ENCODE measurements at regions of chr14 and their contacts with region 1.

Region 1: GRCh38 chr14:91911474-91912032 is 35.9 kb downstream of the FBLN5 start:
- DNase-seq: peak; percentile 52
- H3K4me3 Mint-ChIP-seq: no peak overlapping the region
- H3K27ac Mint-ChIP-seq: no peak overlapping the region
- H3K4me1 Mint-ChIP-seq: peaks cover 12% of the 10 kb centered on the region
- H3K27me3 Mint-ChIP-seq: no peaks in the 10 kb centered on the region
- CTCF ChIP-seq: no peak

Region 2: GRCh38 chr14:91649930-91650329 is 261.6 kb before region 1 on chr14:
- CTCF ChIA-PET with region 1: interaction called, 10 read pairs
- intact Hi-C with region 1: loop called (anchors 5 kb)
- DNase-seq: peak; percentile 41
- H3K4me3 Mint-ChIP-seq: no peak overlapping the region
- H3K27ac Mint-ChIP-seq: no peak overlapping the region
- H3K4me1 Mint-ChIP-seq: peaks cover 9% of the 10 kb centered on the region
- H3K27me3 Mint-ChIP-seq: no peaks in the 10 kb centered on the region
- CTCF ChIP-seq: peak; percentile 19

Region 3: GRCh38 chr14:91780452-91780851 is 131.1 kb before region 1 on chr14:
- CTCF ChIA-PET with region 1: no interaction called
- intact Hi-C with region 1: no loop called
- DNase-seq: no peak
- H3K4me3 Mint-ChIP-seq: no peak overlapping the region
- H3K27ac Mint-ChIP-seq: peak overlapping the region; percentile 33
- H3K4me1 Mint-ChIP-seq: no peaks in the 10 kb centered on the region
- H3K27me3 Mint-ChIP-seq: no peaks in the 10 kb centered on the region
- CTCF ChIP-seq: no peak

Region 4: DNA sequence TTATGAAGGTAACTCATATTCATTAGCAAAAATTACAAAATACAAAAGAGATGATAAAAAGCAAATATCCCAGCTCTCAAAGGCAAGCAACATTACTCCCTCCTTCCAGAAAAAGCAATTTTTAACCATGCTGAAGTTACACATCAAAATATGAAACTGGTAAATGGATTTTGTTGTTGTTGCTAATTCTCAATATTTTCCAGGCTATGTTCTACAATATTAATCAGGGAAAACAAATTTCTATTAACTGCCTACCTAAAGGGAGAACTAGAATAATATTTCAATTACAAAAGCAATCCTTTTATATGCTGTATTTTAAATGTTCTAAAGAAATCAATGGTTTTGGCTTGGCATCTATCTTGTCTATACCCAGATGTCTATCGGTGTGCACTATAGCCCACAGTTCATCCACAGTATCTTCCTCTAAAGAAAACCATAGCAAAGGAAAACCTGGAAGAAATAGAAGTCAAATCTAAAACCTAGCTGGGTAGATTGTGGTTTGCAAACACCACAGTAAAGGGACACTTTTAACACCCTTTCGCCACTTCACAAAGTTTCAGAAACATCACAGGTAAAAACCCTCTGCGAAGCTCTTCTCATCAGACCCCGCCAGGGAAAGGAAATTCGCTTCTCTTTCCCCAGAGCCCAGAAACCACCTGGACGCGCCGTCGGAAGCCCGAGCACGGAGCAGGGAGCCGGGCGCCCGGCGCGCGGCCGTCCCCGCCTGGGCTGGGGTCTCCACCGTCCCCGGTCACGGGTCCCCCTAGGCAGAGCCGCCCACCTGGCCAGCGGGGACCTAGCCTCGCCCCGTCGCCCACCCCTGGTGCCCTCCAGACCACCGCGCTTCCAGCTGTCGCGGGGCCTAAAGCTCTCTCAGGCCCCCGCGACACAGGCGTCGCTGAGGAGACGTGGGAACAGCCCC is 76.1 kb before region 1 on chr14:
- CTCF ChIA-PET with region 1: interaction called, 9 read pairs
- intact Hi-C with region 1: loop called (anchors 5 kb)
- DNase-seq: peak; percentile 25
- H3K4me3 Mint-ChIP-seq: peak overlapping the region; percentile 81
- H3K27ac Mint-ChIP-seq: peak overlapping the region; percentile 77
- H3K4me1 Mint-ChIP-seq: peaks cover 44% of the 10 kb centered on the region
- H3K27me3 Mint-ChIP-seq: no peaks in the 10 kb centered on the region
- CTCF ChIP-seq: no peak

Region 5: DNA sequence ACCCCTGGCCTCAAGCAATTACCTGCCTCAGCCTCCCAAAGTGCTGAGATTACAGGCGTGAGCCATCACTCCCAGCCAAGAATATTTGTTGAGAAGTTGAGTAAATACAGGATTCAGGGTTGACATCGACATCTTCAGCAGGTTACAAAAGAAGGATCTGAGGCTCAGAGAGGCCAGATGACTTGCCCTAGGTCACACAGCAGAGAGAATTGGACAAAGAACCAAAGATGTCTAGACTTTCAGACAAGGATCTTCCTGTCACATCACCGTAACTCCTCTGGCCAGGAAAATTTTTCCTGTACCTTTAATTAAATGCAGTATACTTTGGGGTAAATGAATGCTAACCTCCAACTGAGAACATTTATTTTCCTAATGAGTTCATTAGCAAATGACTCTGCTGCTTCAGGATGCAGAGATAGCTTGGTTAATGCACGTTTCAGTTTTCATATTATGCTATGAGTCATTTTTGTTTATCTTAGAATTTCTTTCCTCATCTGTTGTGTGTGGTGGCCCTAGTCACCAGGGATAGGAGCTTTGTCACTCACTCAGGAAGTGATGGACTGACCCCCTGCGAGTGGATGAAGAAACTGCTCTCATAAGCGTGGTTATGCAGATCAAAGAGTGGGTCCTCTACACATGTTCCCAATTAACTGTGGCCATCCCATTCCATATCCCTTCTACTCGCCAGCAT is 53.2 kb before region 1 on chr14:
- CTCF ChIA-PET with region 1: interaction called, 19 read pairs
- intact Hi-C with region 1: no loop called
- DNase-seq: peak; percentile 63
- H3K4me3 Mint-ChIP-seq: no peak overlapping the region
- H3K27ac Mint-ChIP-seq: peak overlapping the region; percentile 58
- H3K4me1 Mint-ChIP-seq: peaks cover 17% of the 10 kb centered on the region
- H3K27me3 Mint-ChIP-seq: peaks cover 11% of the 10 kb centered on the region
- CTCF ChIP-seq: no peak

Region 6: DNA sequence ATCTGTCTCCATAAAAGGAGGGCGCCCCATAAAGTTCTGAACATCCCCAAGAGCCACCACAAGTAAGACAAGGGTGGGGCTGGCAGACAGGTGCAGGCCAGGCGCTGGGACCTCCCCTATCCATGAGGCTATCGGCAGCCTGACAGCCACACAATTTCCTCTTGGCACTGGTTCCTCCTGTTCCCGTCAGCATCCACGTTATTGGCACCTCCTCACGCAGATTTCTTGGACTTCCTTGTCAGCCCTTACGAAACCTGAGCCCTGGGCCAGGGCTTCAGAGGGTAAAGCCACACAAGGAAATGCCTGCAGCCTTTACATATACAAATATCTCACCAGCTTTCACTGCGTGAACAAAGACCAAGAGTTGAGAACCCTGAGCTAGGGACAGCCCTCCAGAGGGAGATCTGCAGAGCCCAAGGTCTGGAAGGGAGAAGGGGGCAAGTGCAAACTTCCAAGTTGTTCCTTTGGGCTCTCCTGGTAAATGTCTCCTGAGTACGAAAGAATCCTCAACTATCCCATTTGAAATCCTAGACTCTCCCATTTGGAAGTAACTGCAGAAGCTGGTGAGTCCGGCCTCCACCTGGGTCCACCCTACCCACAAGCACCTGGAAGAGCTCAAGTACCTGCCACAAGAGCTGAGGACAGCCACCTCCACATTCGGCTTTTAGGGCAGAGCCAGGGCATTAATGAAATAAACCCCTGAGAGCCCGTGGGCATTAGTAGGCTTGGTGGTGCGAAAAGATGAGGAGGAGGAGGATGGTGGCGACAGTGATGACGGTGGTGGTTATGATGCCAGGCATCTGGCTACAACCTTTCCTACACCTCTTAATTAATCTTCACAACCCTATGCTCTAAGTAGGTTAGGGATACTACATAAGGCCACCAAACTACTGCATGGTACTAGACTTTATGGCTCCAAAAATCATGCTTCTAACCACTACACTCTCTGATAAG is 38.8 kb before region 1 on chr14:
- CTCF ChIA-PET with region 1: interaction called, 8 read pairs
- intact Hi-C with region 1: loop called (anchors 5 kb)
- DNase-seq: peak; percentile 92
- H3K4me3 Mint-ChIP-seq: peak overlapping the region; percentile 56
- H3K27ac Mint-ChIP-seq: peak overlapping the region; percentile 98
- H3K4me1 Mint-ChIP-seq: peaks cover 57% of the 10 kb centered on the region
- H3K27me3 Mint-ChIP-seq: no peaks in the 10 kb centered on the region
- CTCF ChIP-seq: no peak

Region 7: DNA sequence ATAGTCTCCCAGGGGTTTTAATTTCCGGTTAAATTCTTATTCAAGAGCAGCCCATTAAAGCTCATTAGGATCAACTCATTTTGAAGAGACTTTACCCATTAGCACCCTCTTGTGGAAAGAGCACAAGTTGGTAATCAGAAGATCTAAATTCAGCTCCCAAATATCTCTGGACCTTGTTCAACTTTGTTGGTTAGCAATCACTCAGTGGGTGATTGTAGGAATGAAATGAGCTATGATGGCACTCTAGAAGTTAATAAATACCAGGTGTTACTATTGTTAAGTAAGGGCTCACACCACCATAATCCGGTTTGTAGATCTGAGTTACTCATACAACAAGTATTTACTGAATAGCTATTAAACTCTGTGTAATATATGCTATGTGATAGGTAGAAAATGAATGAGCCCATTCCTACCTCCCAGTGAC is 85.4 kb after region 1 on chr14:
- CTCF ChIA-PET with region 1: interaction called, 11 read pairs
- intact Hi-C with region 1: no loop called
- DNase-seq: peak; percentile 36
- H3K4me3 Mint-ChIP-seq: peak overlapping the region; percentile 4
- H3K27ac Mint-ChIP-seq: peak overlapping the region; percentile 78
- H3K4me1 Mint-ChIP-seq: peaks cover 13% of the 10 kb centered on the region
- H3K27me3 Mint-ChIP-seq: no peaks in the 10 kb centered on the region
- CTCF ChIP-seq: no peak

Region 8: DNA sequence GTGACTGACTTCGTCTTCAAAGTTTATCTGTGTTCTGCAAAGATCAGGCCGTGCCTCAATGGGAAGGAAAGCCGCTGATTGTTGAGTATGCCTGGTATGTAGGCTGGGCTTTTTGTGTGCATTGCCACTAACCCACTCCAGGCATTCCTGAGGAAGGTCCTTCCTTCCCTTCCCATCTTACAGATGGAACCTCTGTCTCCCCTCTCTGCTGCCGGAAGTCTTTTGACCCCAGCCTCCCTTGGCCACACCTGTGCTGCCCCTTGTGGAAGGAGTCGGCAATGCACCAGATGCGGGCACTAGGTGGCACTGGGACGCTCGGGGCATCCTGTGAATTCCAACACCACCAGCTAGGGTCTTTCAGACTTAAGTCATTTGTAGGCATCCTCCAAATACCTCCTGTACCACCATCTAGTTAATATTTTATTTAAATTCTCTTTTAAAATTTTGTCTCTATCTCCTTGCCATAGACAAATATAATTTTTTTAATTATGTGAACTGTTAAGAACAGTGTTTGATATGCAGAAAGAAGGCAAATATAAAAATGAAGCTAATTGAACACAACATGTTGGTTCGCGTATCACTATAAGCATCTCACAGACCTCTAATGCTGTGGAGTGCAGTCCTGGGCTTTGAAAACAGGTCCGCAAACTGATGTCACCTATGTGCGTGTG is 701.6 kb after region 1 on chr14:
- CTCF ChIA-PET with region 1: no interaction called
- intact Hi-C with region 1: no loop called
- DNase-seq: peak; percentile 57
- H3K4me3 Mint-ChIP-seq: no peak overlapping the region
- H3K27ac Mint-ChIP-seq: no peak overlapping the region
- H3K4me1 Mint-ChIP-seq: peaks cover 8% of the 10 kb centered on the region
- H3K27me3 Mint-ChIP-seq: no peaks in the 10 kb centered on the region
- CTCF ChIP-seq: peak; percentile 66